A673 (cell line): ENCODE measurements at regions of chr17 and their contacts with region 1.

Region 1: DNA sequence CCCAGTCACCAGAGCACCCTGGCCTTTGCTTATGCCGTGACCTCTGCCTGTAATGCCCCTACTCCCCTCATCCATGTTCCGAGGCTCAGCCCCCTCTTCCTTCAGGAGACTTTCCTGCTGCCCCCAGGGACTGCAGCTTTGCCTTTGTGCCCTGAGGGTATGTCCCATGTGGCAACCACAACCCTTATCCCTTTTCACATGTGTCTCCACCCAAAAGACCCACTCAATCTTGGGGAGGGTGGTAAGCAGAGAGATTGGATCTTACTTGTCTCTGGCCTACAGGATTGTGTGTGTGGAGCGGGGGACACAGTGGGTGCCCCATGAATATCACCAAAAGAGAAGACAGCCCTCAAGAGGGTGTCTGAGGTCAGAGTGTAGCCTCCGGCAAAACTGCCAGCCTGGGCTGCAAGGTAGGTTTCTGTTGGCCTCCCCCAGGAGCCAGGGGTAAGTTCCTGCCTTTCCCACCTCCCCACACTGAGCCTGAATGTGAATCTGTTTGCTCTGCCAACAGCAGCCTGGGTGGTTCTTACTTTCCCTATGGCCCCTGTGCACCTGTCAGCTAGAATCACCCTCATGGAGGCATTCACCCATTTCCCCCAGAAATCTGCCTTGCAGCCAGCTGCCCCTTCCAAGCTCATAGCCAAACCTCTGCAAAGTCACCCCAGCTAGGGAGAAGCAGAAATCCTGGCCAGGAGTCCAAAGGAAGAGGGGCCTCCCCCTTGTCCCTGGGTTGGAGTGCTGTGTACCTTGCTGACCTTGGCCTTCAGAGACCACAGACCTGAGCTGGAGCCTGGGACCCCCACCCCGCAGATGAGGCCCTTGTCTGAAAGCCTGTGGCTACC is 11.5 kb upstream of the C17orf113 start:
- DNase-seq: no peak
- H3K4me3 ChIP-seq: no peak overlapping the region
- H3K27ac ChIP-seq: no peak overlapping the region
- H3K4me1 ChIP-seq: no peaks in the 10 kb centered on the region
- H3K27me3 ChIP-seq: no peaks in the 10 kb centered on the region
- CTCF ChIP-seq: no peak

Region 2: DNA sequence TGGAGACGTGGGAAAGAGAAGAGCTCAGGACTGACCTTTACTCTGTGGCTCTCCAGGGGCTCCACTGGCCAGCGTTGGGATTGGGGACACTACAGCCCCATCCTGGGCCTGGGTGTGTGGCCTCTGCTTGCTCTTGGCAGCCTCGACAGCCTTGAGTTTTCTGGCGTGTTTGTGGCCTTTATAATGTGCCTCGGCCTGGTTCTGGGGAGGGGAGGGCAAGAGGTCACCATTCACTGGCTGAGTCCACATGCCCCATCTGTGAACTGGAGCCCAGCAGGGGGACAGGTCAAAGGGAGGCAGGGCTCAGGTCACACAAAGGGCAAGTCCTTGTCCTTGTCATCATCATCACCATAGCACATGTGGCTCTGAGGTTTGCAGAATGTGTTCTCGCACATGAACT is 30.3 kb before region 1 on chr17:
- CTCF ChIA-PET with region 1: interaction called, 13 read pairs
- POLR2A ChIA-PET with region 1: no interaction called
- intact Hi-C with region 1: no loop called
- DNase-seq: no peak
- H3K4me3 ChIP-seq: no peak overlapping the region
- H3K27ac ChIP-seq: no peak overlapping the region
- H3K4me1 ChIP-seq: no peaks in the 10 kb centered on the region
- H3K27me3 ChIP-seq: no peaks in the 10 kb centered on the region
- CTCF ChIP-seq: no peak